CD4-positive, alpha-beta memory T cell (primary cell): ENCODE measurements at regions of chr9 and their contacts with region 1.

Region 1: GRCh38 chr9:129131300-129132145 is 20.3 kb downstream of the PTPA start:
- DNase-seq: peak; percentile 81 to 85 (median 82)
- H3K4me3 ChIP-seq: no peak overlapping the region
- H3K4me3 Mint-ChIP-seq: no peak overlapping the region
- H3K27ac ChIP-seq: no peak overlapping the region
- H3K27ac Mint-ChIP-seq: peak overlapping the region in 6 of 7 donors; percentile 3 to 64 (median 48)
- H3K4me1 ChIP-seq: peaks cover 8% of the 10 kb centered on the region
- H3K4me1 Mint-ChIP-seq: peaks cover 0 to 13% (median 6%) of the 10 kb centered on the region in 4 donors
- H3K27me3 ChIP-seq: no peaks in the 10 kb centered on the region
- H3K27me3 Mint-ChIP-seq: no peaks in the 10 kb centered on the region

Region 2: GRCh38 chr9:129110740-129111527 is 20.6 kb before region 1 on chr9 and contains the starts of genes CRAT and PTPA:
- CTCF ChIA-PET with region 1: interaction called, 31 read pairs
- POLR2A ChIA-PET with region 1: interaction called, 6 read pairs
- intact Hi-C with region 1: no loop called
- DNase-seq: peak; percentile 90 to 96 (median 91)
- H3K4me3 ChIP-seq: peak within 1 kb of the TSS; percentile 90 to 93
- H3K4me3 Mint-ChIP-seq: peak within 1 kb of the TSS; percentile 92 to 99 (median 94)
- H3K27ac ChIP-seq: peak within 1 kb of the TSS; percentile 84
- H3K27ac Mint-ChIP-seq: peak within 1 kb of the TSS; percentile 83 to 97 (median 96)
- H3K4me1 ChIP-seq: peaks cover 40% of the 10 kb centered on the region
- H3K4me1 Mint-ChIP-seq: peaks cover 17 to 46% (median 29%) of the 10 kb centered on the region in 4 donors
- H3K27me3 ChIP-seq: no peaks in the 10 kb centered on the region
- H3K27me3 Mint-ChIP-seq: no peaks in the 10 kb centered on the region
- total RNA-seq, gene CRAT: 11.2 to 12.4 TPM
- total RNA-seq, gene PTPA: 49.0 to 51.3 TPM

Region 3: DNA sequence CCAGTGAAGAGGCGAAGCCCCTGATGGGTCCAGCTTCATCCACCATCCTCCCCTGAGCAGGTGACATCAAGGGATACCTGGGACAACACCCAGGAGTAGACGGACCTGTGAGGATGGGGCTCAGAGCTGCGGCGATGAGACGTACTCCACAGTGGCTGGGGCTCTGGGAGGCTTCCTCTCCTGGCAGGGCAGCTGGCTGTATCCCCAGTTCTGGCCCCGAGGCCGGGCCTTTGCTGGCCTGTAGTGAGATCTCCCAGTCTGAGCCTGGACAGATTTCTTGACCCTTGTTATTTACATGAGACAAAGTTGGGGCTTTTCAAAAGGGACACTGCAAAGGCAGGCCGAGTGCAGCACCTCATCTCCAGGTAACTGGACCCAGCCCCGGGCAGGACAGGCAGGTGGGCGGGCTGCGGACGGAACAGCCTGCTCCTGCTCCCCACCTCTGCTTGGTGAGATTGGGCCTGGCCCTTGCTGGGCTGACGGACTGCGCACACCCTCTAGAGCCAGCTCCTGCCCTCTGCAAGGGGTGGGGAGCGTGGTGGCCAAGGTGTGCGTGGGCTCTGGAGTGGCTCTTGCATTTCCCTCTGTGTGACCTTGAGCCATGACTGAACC is 23.4 kb after region 1 on chr9:
- CTCF ChIA-PET with region 1: interaction called, 10 read pairs
- POLR2A ChIA-PET with region 1: no interaction called
- intact Hi-C with region 1: no loop called
- DNase-seq: no peak
- H3K4me3 ChIP-seq: no peak overlapping the region
- H3K4me3 Mint-ChIP-seq: no peak overlapping the region
- H3K27ac ChIP-seq: no peak overlapping the region
- H3K27ac Mint-ChIP-seq: no peak overlapping the region
- H3K4me1 ChIP-seq: no peaks in the 10 kb centered on the region
- H3K4me1 Mint-ChIP-seq: no peaks in the 10 kb centered on the region
- H3K27me3 ChIP-seq: no peaks in the 10 kb centered on the region
- H3K27me3 Mint-ChIP-seq: no peaks in the 10 kb centered on the region

Region 4: GRCh38 chr9:129320575-129321263 is 189.2 kb after region 1 on chr9:
- CTCF ChIA-PET with region 1: interaction called, 11 read pairs
- POLR2A ChIA-PET with region 1: no interaction called
- intact Hi-C with region 1: no loop called
- DNase-seq: peak; percentile 63 to 74 (median 68)
- H3K4me3 ChIP-seq: peak overlapping the region in 1 of 2 donors; percentile 51
- H3K4me3 Mint-ChIP-seq: peak overlapping the region; percentile 62 to 90 (median 82)
- H3K27ac ChIP-seq: no peak overlapping the region
- H3K27ac Mint-ChIP-seq: peak overlapping the region in 6 of 7 donors; percentile 50 to 97 (median 78)
- H3K4me1 ChIP-seq: peaks cover 20% of the 10 kb centered on the region
- H3K4me1 Mint-ChIP-seq: peaks cover 5 to 20% (median 9%) of the 10 kb centered on the region in 4 donors
- H3K27me3 ChIP-seq: no peaks in the 10 kb centered on the region
- H3K27me3 Mint-ChIP-seq: peaks cover 0 to 1% of the 10 kb centered on the region in 2 donors

Region 5: DNA sequence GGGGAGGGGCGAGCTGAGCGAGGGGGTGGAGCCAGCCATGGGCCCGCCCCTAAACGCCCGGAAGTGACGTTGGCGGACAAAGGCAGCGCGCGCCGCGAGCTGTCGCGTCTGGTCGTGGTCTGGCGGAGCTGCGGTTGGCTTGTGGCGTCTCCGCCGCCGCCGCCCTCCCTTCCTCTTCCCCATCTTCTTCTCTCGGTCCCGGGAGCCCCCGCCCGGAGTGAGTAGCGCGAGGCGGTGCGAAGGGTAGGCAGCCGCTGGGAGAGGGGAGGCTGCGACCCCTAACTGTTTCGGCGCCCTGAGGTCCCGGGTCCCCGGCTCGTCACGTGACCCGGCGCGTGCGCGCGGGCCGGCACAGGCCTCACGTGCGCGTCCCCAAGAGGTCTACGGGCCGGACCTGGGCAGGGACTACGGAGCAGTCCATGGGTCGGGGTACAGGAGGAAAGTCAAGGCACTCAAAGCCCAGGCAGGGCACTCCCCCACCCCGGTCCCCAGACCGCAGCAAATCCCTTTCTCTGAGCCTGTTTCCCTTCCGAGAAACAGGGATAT is 494.6 kb after region 1 on chr9 and contains the start of gene NTMT1:
- CTCF ChIA-PET with region 1: interaction called, 113 read pairs
- POLR2A ChIA-PET with region 1: interaction called, 58 read pairs
- intact Hi-C with region 1: no loop called
- DNase-seq: peak; percentile 88 to 91 (median 90)
- H3K4me3 ChIP-seq: peak within 1 kb of the TSS; percentile 80 to 98
- H3K4me3 Mint-ChIP-seq: peak within 1 kb of the TSS; percentile 84 to 93 (median 89)
- H3K27ac ChIP-seq: peak within 1 kb of the TSS; percentile 91
- H3K27ac Mint-ChIP-seq: peak within 1 kb of the TSS; percentile 89 to 96 (median 95)
- H3K4me1 ChIP-seq: peaks cover 48% of the 10 kb centered on the region
- H3K4me1 Mint-ChIP-seq: peaks cover 27 to 72% (median 53%) of the 10 kb centered on the region in 4 donors
- H3K27me3 ChIP-seq: peaks cover under 1% of the 10 kb centered on the region
- H3K27me3 Mint-ChIP-seq: peaks cover 5 to 14% of the 10 kb centered on the region in 2 donors
- total RNA-seq, gene NTMT1: 45.0 to 45.3 TPM

Region 6: DNA sequence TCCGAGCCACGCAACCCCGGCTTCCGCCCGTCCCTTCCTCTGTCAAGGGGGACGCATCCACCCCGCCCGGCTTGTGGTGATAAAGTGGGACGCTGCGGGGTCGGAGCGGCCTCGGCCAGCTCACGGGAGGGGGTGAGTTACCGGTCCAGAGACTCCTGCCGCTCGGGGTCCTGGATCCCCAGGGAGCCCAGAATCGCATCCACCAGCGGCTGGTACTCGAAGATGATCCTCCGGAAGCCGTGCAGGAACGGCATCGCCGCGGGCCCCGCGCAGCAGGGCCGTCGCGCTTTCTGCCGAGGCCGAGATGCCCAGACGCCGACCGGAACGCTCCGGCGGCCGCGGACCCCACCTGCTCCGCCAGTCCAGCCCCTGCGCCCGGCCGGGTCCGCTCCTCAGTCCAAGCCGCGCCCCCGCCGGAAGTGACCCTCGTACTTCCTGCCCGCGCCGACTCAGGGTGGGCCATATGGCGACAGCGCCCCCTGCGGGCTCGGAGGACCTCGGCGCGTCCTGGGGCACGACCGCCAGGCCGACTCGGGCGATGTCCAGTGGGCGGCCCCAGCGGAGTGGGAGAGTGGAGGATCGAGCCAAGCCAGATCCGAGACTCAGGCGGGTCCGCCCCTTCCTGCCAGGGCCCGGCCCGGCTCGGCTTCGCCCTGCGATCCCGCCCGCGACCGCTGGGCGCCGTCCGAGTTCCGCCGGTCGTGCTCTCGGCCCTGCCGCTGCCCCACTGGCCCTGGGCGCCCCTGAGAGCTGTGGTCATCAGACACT is 510.4 kb after region 1 on chr9 and contains the start of gene ASB6:
- CTCF ChIA-PET with region 1: interaction called, 11 read pairs
- POLR2A ChIA-PET with region 1: no interaction called
- intact Hi-C with region 1: no loop called
- DNase-seq: peak; percentile 86 to 92 (median 87)
- H3K4me3 ChIP-seq: peak within 1 kb of the TSS; percentile 66 to 95
- H3K4me3 Mint-ChIP-seq: peak within 1 kb of the TSS; percentile 81 to 92 (median 84)
- H3K27ac ChIP-seq: peak within 1 kb of the TSS; percentile 81
- H3K27ac Mint-ChIP-seq: peak within 1 kb of the TSS; percentile 85 to 94 (median 89)
- H3K4me1 ChIP-seq: peaks cover 26% of the 10 kb centered on the region
- H3K4me1 Mint-ChIP-seq: peaks cover 10 to 33% (median 18%) of the 10 kb centered on the region in 4 donors
- H3K27me3 ChIP-seq: no peaks in the 10 kb centered on the region
- H3K27me3 Mint-ChIP-seq: no peaks in the 10 kb centered on the region
- total RNA-seq, gene ASB6: 33.0 to 33.1 TPM

Region 7: DNA sequence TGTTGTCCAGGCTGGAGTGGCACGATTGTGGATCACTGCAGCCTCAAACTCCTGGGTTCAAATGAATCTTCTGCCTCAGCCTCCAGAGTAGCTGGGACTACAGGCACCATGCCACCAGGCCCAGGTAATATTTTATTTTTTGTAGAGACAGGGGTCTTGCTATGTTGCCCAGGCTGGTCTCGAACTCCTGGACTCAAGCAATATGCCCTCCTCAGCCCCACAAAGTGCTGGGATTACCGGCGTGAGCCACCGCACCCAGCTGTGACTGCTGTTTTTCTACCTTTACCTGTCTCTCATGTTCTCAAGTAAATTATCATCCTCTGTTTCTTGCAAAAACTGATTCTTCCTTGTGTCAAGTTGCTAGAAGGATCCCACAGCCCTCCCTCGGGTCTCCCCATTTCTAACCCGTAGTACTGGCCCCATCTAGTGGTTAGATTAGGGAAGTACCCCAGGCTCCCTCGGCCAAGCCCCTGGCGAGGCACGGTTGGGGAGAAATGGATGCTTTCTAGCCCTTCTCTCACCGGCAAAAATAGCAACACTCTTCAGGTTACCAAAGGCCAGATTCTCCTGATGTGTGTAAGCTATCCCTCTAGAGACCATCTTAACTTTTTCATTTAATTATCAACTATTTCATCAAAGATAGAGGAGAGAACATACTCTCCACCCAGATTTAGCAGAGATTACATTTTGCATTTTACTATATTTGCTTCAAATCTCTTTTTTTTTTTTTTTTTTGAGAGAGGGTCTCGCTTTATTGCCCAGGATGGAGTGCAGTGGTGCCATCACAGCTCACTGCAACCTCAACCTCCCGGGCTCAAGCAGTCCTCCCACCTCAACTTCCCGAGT is 652.2 kb after region 1 on chr9:
- CTCF ChIA-PET with region 1: interaction called, 49 read pairs
- POLR2A ChIA-PET with region 1: no interaction called
- intact Hi-C with region 1: loop called (anchors 1 kb)
- DNase-seq: peak; percentile 68 to 78 (median 74)
- H3K4me3 ChIP-seq: no peak overlapping the region
- H3K4me3 Mint-ChIP-seq: no peak overlapping the region
- H3K27ac ChIP-seq: no peak overlapping the region
- H3K27ac Mint-ChIP-seq: peak overlapping the region in 2 of 7 donors; percentile 20 to 61
- H3K4me1 ChIP-seq: peaks cover 3% of the 10 kb centered on the region
- H3K4me1 Mint-ChIP-seq: peaks cover 0 to 4% (median 3%) of the 10 kb centered on the region in 4 donors
- H3K27me3 ChIP-seq: no peaks in the 10 kb centered on the region
- H3K27me3 Mint-ChIP-seq: peaks cover 5 to 6% of the 10 kb centered on the region in 2 donors